ENCODE measurements at regions of chr19 and their contacts with region 1.

Region 1: DNA sequence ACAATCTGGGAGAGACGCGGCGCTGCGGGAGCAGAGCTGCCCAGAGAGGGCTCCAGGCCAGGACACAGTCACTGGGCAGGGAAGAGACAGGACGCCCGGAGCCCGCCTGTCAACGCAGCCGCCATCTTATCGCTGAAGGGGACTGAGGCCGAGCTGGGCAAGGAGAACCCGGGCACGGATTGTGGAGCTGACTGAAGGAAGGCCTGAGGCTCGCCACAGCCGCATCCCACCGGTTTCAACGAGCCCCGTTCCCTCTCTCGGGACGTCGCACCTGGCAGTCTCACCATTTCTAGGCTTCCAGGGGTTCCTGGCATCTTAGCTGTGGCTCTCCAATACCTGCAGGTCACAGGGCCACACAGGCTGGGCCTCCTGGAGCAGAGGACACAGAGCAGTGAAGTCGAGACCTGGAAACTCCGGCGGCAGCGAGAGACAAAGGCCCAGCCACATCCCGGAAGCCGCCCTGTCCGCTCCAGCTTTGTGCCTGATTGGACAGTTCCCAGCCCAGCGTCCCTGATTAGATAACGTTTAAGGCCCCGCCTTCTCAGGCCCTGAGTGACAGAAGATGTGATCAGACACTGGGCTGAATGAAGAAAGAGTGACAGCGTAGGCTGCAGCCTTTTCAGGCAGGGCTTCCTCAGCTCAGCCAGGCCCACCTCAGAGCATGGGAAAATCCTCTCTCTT is at the start of gene ZNF91:
- DNase-seq: peak; percentile 73 to 87 (median 76)
- H3K4me3 ChIP-seq: peak within 1 kb of the TSS; percentile 69 to 94 (median 87)
- H3K4me3 Mint-ChIP-seq: peak within 1 kb of the TSS; percentile 96 to 97
- H3K27ac ChIP-seq: peak within 1 kb of the TSS; percentile 92 to 94
- H3K27ac Mint-ChIP-seq: peak within 1 kb of the TSS; percentile 93 to 98 (median 97)
- H3K4me1 ChIP-seq: peaks cover 8 to 9% of the 10 kb centered on the region in 2 donors
- H3K4me1 Mint-ChIP-seq: peaks cover 10% of the 10 kb centered on the region
- H3K27me3 ChIP-seq: no peaks in the 10 kb centered on the region
- H3K27me3 Mint-ChIP-seq: no peaks in the 10 kb centered on the region
- CTCF ChIP-seq: no peak
- polyA plus RNA-seq, gene ZNF91: 3.5 to 5.5 (median 4.9) TPM

Region 2: GRCh38 chr19:23249911-23250649 is 145.1 kb before region 1 on chr19 and contains the start of gene ZNF724:
- intact Hi-C with region 1: loop called in 1 of 2 experiments (anchors 10 kb)
- DNase-seq: peak; percentile 81 to 89 (median 87)
- H3K4me3 ChIP-seq: peak within 1 kb of the TSS; percentile 75 to 92 (median 79)
- H3K4me3 Mint-ChIP-seq: peak within 1 kb of the TSS; percentile 97 to 98
- H3K27ac ChIP-seq: peak within 1 kb of the TSS; percentile 76 to 82
- H3K27ac Mint-ChIP-seq: peak within 1 kb of the TSS; percentile 87 to 96 (median 92)
- H3K4me1 ChIP-seq: peaks cover 9 to 11% of the 10 kb centered on the region in 2 donors
- H3K4me1 Mint-ChIP-seq: peaks cover 16% of the 10 kb centered on the region
- H3K27me3 ChIP-seq: no peaks in the 10 kb centered on the region
- H3K27me3 Mint-ChIP-seq: peaks cover 0 to 8% (median 3%) of the 10 kb centered on the region in 3 donors
- CTCF ChIP-seq: no peak
- polyA plus RNA-seq, gene ZNF724: 0.25 to 0.59 (median 0.40) TPM

Measured in CD14-positive monocyte (primary cell).